Activated T-helper 2 cell treated with anti-CD3 and anti-CD28 coated beads, Interferon-gamma antibody, Interleukin-2, Interleukin-4, amounts not matched to agents 10 μg/mL and 5 μg/mL and 100 μg/mL, durations not matched to agents 14 hours and 24 hours and 36 hours (primary cell): ENCODE measurements at regions of chr3 and their contacts with region 1.

Region 1: GRCh38 chr3:168047190-168047795 is 48.4 kb downstream of the GOLIM4 start:
- DNase-seq: no peak
- H3K4me3 Mint-ChIP-seq: no peak overlapping the region
- H3K27ac Mint-ChIP-seq: no peak overlapping the region
- H3K4me1 Mint-ChIP-seq: no peaks in the 10 kb centered on the region
- H3K27me3 Mint-ChIP-seq: peaks cover 1% of the 10 kb centered on the region

Region 2: GRCh38 chr3:167992381-167992780 is 54.9 kb before region 1 on chr3:
- intact Hi-C with region 1: no loop called
- DNase-seq: no peak
- H3K4me3 Mint-ChIP-seq: no peak overlapping the region
- H3K27ac Mint-ChIP-seq: no peak overlapping the region
- H3K4me1 Mint-ChIP-seq: no peaks in the 10 kb centered on the region
- H3K27me3 Mint-ChIP-seq: peaks cover 2% of the 10 kb centered on the region

Region 3: GRCh38 chr3:168165390-168166269 is 118.3 kb after region 1 on chr3:
- intact Hi-C with region 1: loop called (anchors 1 kb)
- DNase-seq: no peak
- H3K4me3 Mint-ChIP-seq: no peak overlapping the region
- H3K27ac Mint-ChIP-seq: no peak overlapping the region
- H3K4me1 Mint-ChIP-seq: peaks cover 1% of the 10 kb centered on the region
- H3K27me3 Mint-ChIP-seq: peaks cover 2% of the 10 kb centered on the region

Region 4: DNA sequence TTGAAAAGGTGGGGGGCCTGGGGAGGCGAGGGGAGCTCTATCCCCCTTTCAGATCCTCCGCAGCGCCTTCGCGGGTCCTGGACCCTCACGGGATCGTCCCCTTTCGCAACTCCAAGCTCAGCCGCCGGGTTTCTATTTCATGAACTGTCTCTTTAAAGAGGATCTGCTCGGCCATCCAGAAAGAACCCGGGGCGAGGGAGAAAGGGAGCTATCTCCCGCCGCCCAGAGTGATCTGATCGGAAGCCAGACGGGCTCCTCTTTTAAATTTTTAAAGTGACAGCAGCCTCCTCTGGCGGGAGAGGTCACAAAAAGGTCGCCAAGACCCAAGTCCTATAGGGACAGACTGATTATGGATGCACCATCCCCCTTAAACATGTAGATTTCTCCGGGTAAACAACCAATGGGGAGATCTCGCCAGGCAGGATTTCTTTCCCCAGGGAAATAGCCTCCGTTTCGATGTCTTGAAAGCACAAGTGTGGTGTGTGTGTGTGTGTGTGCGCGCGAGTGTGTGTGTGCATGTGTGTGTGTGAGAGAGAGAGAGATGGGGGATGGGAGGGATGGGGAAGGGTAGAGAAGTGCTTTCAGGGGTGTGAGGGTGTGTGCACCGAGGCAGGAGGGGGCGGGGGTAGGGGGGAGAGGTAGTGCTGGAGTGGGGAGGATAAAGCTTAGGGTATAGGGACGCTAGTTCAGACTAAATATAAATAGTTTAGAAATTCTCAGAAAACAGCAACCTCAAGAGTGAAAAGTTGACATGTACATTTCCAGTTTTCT is 1100.1 kb after region 1 on chr3:
- intact Hi-C with region 1: no loop called
- DNase-seq: peak; percentile 8
- H3K4me3 Mint-ChIP-seq: peak overlapping the region; percentile 32
- H3K27ac Mint-ChIP-seq: no peak overlapping the region
- H3K4me1 Mint-ChIP-seq: peaks cover 16% of the 10 kb centered on the region
- H3K27me3 Mint-ChIP-seq: peaks cover 74% of the 10 kb centered on the region